Activated CD8-positive, alpha-beta T cell treated with anti-CD3 and anti-CD28 coated beads, Interleukin-2, amount 10 ng/mL, durations not matched to agents 7 days and 5 days (primary cell): ENCODE measurements at regions of chr5 and their contacts with region 1.

Region 1: GRCh38 chr5:96868603-96869371 is 7.5 kb upstream of the ERAP2 start:
- DNase-seq: peak; percentile 58
- ATAC-seq: peak; percentile 95
- H3K4me3 Mint-ChIP-seq: no peak overlapping the region
- H3K27ac Mint-ChIP-seq: no peak overlapping the region
- H3K4me1 Mint-ChIP-seq: peaks cover 50% of the 10 kb centered on the region
- H3K27me3 Mint-ChIP-seq: peaks cover 2% of the 10 kb centered on the region

Region 2: GRCh38 chr5:96807075-96807654 is 61.6 kb before region 1 on chr5:
- CTCF ChIA-PET with region 1: interaction called, 27 read pairs
- POLR2A ChIA-PET with region 1: interaction called, 11 read pairs
- DNase-seq: peak; percentile 54
- ATAC-seq: peak; percentile 28
- H3K4me3 Mint-ChIP-seq: peak overlapping the region; percentile 90
- H3K27ac Mint-ChIP-seq: peak overlapping the region; percentile 99
- H3K4me1 Mint-ChIP-seq: peaks cover 73% of the 10 kb centered on the region
- H3K27me3 Mint-ChIP-seq: no peaks in the 10 kb centered on the region

Region 3: DNA sequence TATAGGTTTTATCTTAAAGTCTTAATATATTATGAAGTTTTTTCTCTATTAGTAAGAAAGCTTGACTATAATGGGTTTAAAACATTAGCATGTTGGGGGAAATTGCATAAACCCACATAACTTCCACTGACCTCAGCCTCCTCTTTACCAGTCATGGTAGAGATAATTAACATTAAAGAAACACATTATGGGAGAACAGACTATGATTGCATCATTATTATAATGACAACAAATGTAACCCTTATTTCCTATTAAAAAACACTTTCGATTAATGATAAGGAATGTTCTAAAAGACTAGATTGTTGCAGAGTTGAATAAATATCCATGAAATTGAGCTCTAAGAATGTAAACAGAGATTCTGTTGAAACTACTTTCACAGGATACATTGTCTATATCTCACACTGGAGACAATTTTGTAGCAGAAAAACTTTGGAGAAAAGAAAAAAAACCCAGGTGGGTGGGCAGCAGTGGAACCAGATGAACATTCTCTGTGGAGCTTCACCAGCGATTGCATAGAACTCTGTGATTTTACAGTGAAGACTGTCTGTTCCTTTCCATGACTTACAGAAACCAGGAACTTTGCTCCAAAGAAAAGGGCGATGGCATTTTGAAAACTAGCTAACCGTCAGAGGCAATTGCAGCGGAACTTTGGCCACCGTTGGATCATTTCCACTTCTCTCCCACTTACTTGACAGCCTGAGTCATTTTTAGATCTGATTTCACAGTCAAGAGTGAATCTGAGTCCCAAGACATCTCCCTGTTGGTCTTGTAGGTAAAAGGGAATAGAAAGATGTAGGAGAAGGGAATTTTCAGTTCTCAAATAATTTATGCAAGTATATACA is 13.5 kb before region 1 on chr5:
- CTCF ChIA-PET with region 1: interaction called, 13 read pairs
- POLR2A ChIA-PET with region 1: no interaction called
- DNase-seq: no peak
- ATAC-seq: no peak
- H3K4me3 Mint-ChIP-seq: no peak overlapping the region
- H3K27ac Mint-ChIP-seq: no peak overlapping the region
- H3K4me1 Mint-ChIP-seq: no peaks in the 10 kb centered on the region
- H3K27me3 Mint-ChIP-seq: peaks cover 7% of the 10 kb centered on the region

Region 4: DNA sequence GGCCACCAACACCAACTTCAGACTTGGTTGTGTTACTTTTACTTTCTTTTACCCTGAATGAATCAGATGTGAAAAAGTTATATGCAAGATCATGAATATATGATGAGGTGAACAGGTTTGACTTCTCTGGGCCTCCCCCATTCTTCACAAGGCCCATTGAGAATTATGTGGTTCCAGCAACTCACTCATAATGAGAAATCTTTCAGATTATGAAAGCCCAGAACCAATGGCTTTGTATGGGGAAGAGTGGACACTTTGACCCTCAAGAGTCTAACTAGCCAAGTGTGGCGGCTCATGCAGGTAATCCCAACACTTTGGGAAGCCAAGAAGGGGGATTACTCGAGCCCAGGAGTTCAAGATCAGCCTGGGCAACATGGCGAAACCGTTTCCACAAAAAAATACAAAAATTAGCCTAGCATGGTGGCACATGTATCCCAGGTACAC is 51.0 kb after region 1 on chr5:
- CTCF ChIA-PET with region 1: interaction called, 13 read pairs
- POLR2A ChIA-PET with region 1: no interaction called
- DNase-seq: no peak
- ATAC-seq: no peak
- H3K4me3 Mint-ChIP-seq: no peak overlapping the region
- H3K27ac Mint-ChIP-seq: no peak overlapping the region
- H3K4me1 Mint-ChIP-seq: peaks cover 34% of the 10 kb centered on the region
- H3K27me3 Mint-ChIP-seq: no peaks in the 10 kb centered on the region

Region 5: GRCh38 chr5:96963267-96963666 is 94.5 kb after region 1 on chr5:
- CTCF ChIA-PET with region 1: interaction called, 10 read pairs
- POLR2A ChIA-PET with region 1: interaction called, 3 read pairs
- DNase-seq: peak; percentile 65
- ATAC-seq: peak; percentile 60
- H3K4me3 Mint-ChIP-seq: peak overlapping the region; percentile 72
- H3K27ac Mint-ChIP-seq: peak overlapping the region; percentile 96
- H3K4me1 Mint-ChIP-seq: peaks cover 72% of the 10 kb centered on the region
- H3K27me3 Mint-ChIP-seq: no peaks in the 10 kb centered on the region

Region 6: DNA sequence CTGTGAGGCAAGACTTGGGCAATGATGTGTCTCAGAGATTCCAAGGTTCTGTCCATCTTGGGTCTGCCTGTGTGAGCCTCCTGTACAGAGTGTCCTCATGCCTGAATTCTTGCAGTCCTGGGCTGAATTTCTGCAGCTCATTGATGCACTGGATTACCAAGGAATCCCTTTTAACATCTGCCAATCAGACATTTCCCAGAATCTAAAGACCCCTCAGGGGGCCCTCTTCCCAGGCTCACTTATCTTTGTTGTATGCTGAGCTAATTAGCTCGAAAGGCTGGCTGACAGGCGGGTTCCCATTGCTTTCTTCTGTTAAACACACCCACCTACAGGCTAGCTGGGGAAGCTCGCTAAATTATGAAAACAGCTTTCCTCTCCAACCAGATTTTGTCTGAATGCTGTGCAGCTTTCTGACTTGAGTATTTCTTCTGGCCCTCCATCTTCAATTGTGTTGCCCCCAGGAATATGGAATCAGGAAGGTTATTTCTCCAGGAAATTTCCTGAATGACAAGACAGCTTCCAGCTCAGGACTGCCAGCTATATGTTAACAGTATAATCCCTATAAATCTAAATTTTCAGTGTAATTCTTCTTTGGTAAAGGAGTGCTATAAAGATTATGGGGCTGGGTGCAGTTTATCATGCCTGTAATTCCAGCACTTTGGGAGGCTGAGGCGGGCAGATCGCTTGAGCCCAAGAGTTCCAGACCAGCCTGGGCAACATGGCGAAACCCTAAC is 273.9 kb after region 1 on chr5 and contains the start of gene LIX1:
- CTCF ChIA-PET with region 1: interaction called, 86 read pairs
- POLR2A ChIA-PET with region 1: no interaction called
- DNase-seq: peak; percentile 59
- ATAC-seq: peak; percentile 78
- H3K4me3 Mint-ChIP-seq: no peak within 1 kb of the TSS
- H3K27ac Mint-ChIP-seq: no peak within 1 kb of the TSS
- H3K4me1 Mint-ChIP-seq: no peaks in the 10 kb centered on the region
- H3K27me3 Mint-ChIP-seq: peaks cover 13% of the 10 kb centered on the region
- total RNA-seq, gene LIX1: not detected